A673 (cell line): ENCODE measurements at regions of chr2 and their contacts with region 1.

Region 1: GRCh38 chr2:85635636-85636035 is 19.6 kb downstream of the USP39 start:
- DNase-seq: no peak
- H3K4me3 ChIP-seq: no peak overlapping the region
- H3K27ac ChIP-seq: no peak overlapping the region
- H3K4me1 ChIP-seq: no peaks in the 10 kb centered on the region
- H3K27me3 ChIP-seq: no peaks in the 10 kb centered on the region
- CTCF ChIP-seq: no peak

Region 2: DNA sequence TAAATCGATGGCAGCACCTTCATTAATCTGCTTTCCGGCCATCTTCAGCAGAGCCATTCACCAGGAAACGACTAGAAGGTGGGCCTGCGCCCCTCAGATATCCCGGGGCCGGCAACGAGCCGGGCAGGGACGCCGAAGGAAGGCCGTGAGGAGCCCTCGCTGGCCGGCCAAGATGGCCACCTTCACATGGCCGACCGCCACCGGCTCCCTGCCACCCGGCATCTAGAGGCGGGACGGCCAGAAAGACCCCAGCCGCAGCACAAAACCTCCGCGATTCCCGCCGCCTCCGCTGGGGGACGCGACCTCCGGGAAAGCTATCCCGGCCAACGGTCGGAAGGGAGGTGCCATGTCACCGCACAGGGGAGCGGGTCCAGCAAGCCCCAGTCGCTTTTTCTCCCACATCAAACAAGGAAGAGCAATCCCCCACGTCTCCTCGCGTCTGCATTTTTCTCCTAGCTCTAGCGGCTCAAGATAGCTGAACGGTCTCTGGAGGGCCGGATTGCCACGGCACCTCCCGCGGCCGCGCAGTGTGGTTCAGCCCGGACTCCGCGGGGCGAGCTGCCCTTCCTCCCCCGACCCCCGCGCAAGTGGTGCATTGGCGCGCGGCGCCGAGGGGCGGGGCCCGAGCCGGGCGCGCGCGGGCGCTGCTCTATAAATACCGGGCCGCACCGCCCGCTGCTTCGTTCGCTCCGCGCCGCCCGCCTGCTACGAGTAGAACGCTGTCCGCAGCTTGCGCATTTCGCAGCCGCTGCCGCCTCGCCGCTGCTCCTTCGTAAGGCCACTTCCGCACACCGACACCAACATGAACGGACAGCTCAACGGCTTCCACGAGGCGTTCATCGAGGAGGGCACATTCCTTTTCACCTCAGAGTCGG is 96.9 kb before region 1 on chr2 and contains the start of gene MAT2A:
- CTCF ChIA-PET with region 1: no interaction called
- POLR2A ChIA-PET with region 1: no interaction called
- intact Hi-C with region 1: no loop called
- DNase-seq: peak; percentile 95
- H3K4me3 ChIP-seq: peak within 1 kb of the TSS; percentile 93
- H3K27ac ChIP-seq: peak within 1 kb of the TSS; percentile 99
- H3K4me1 ChIP-seq: peaks cover 36% of the 10 kb centered on the region
- H3K27me3 ChIP-seq: no peaks in the 10 kb centered on the region
- CTCF ChIP-seq: peak; percentile 74
- total RNA-seq, gene MAT2A: 355 and 408 TPM in 2 replicates

Region 3: GRCh38 chr2:86079981-86080911 is 444.6 kb after region 1 on chr2:
- CTCF ChIA-PET with region 1: no interaction called
- POLR2A ChIA-PET with region 1: no interaction called
- intact Hi-C with region 1: loop called (anchors 2 kb)
- DNase-seq: peak; percentile 78
- H3K4me3 ChIP-seq: no peak overlapping the region
- H3K27ac ChIP-seq: no peak overlapping the region
- H3K4me1 ChIP-seq: no peaks in the 10 kb centered on the region
- H3K27me3 ChIP-seq: no peaks in the 10 kb centered on the region
- CTCF ChIP-seq: peak; percentile 92